Colonic mucosa (tissue), 4 donors: ENCODE measurements at regions of chr17 and their contacts with region 1.

Region 1: DNA sequence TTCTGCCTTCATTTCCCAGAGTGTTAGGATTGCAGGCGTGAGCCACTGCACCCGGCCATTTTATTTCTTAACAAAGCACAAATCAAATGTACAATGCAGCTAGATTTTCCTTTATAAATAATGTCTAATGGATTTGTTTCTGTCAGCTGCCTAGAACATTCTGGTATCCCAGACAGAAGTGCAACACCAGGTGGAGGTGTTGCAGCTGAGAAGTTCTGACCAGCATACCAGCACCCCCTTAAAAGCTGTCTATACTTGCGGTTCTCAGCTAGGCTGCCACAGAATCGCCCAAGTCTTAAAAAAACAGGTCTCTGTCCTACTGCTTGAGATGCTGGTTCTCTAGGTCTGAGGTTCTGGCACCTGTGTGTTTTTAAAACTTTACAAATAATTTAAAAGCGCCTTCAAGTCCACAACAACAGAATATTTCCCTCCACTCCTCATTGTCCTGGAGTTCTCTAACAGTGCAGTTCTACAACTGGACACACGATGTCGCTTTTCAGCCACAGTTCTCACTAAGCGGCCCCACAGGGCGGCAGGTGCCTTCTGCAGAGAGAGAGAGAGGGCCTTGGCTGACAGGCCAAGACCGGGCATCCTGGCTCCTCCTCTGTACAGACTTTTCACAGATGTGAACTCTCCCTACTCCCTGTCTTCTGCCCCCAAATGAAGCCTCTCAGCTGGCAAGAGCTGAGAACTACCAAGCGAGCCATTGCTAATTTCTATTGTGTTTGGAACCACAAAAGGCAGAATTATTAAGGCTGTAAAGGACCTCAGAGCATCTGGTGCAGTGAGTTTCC is 32.6 kb upstream of the MEOX1 start:
- DNase-seq: peak; percentile 79
- H3K4me3 ChIP-seq: no peak overlapping the region
- H3K27ac ChIP-seq: no peak overlapping the region
- H3K4me1 ChIP-seq: no peaks in the 10 kb centered on the region
- H3K27me3 ChIP-seq: no peaks in the 10 kb centered on the region
- CTCF ChIP-seq: peak; percentile 90

Region 2: GRCh38 chr17:43591779-43592562 is 102.3 kb before region 1 on chr17:
- intact Hi-C with region 1: no loop called
- DNase-seq: peak; percentile 62
- H3K4me3 ChIP-seq: no peak overlapping the region
- H3K27ac ChIP-seq: peak overlapping the region; percentile 57
- H3K4me1 ChIP-seq: no peaks in the 10 kb centered on the region
- H3K27me3 ChIP-seq: no peaks in the 10 kb centered on the region
- CTCF ChIP-seq: no peak

Region 3: DNA sequence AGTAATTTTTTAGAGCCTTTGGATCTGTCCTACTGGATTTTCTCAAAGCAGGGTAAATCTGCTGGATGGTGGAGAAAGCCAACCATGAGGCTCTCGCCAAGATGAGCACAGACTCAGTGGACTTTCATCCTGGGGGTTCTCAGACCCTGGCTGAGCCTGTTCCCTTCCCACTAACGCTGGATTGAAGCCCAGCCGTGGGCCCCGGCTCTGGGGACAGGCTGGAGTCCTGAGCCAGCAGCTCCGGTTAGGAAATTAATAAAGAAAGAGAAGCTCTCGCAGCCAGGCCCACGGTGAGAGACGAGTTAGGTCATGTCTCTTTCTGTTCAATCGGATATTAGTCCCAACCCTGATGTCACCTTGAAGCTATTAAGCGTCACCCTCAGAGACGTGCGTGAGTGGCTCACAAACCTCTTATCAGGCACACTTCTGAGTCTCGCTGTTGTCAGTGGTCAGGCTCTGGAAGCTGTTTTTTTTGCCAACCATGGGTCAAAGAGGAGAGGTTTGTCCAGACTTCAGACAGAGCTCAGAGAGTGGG is 59.6 kb before region 1 on chr17:
- intact Hi-C with region 1: loop called (anchors 10 kb)
- DNase-seq: no peak
- H3K4me3 ChIP-seq: no peak overlapping the region
- H3K27ac ChIP-seq: no peak overlapping the region
- H3K4me1 ChIP-seq: no peaks in the 10 kb centered on the region
- H3K27me3 ChIP-seq: no peaks in the 10 kb centered on the region
- CTCF ChIP-seq: no peak

Region 4: GRCh38 chr17:43760254-43760852 is 66.1 kb after region 1 on chr17:
- intact Hi-C with region 1: loop called (anchors 2 kb)
- DNase-seq: peak; percentile 97
- H3K4me3 ChIP-seq: no peak overlapping the region
- H3K27ac ChIP-seq: no peak overlapping the region
- H3K4me1 ChIP-seq: peaks cover 3% of the 10 kb centered on the region
- H3K27me3 ChIP-seq: peaks cover 7% of the 10 kb centered on the region
- CTCF ChIP-seq: peak; percentile 95

Region 5: DNA sequence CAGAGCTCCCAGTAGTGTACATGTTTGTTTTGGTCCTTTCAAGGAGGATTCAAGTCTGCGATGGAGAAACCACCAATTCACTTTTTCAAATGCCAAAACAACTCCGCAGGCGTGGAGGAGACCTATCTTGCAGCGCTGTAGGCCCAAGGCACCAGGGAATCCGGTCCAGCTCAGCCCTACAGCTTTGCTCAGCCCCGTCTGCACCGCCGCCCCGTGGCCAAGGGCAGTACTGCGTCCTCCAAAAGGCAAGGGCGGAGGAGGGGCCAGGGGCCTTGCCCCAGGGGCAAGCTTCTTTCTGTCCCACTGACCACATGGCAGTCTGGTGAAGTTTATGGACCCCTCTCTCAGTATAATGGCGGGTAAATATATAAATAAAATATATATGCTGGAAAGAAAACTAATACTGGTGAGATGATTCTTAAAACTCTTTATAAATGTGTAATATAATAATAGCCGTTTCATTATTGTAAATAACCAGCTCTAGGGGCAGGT is 152.0 kb after region 1 on chr17:
- intact Hi-C with region 1: loop called (anchors 5 kb)
- DNase-seq: peak; percentile 86
- H3K4me3 ChIP-seq: no peak overlapping the region
- H3K27ac ChIP-seq: no peak overlapping the region
- H3K4me1 ChIP-seq: no peaks in the 10 kb centered on the region
- H3K27me3 ChIP-seq: no peaks in the 10 kb centered on the region
- CTCF ChIP-seq: peak; percentile 98